K562 (cell line): ENCODE measurements at regions of chr7 and their contacts with region 1.

Region 1: GRCh38 chr7:100896732-100897608 is 1.3 kb upstream of the ACHE start:
- DNase-seq: peak; percentile 77 to 80 (median 78)
- ATAC-seq: peak; percentile 53
- H3K4me3 ChIP-seq: peak overlapping the region; percentile 39
- H3K27ac ChIP-seq: peak overlapping the region; percentile 48
- H3K4me1 ChIP-seq: peaks cover 27 to 71% of the 10 kb centered on the region in 2 experiments
- H3K27me3 ChIP-seq: no peaks in the 10 kb centered on the region
- CTCF ChIP-seq: peak; percentile 79 to 94 (median 84)
- EP300 ChIP-seq: no peak
- POLR2A ChIP-seq: no peak
- RAD21 ChIP-seq: peak; percentile 74 to 77

Region 2: DNA sequence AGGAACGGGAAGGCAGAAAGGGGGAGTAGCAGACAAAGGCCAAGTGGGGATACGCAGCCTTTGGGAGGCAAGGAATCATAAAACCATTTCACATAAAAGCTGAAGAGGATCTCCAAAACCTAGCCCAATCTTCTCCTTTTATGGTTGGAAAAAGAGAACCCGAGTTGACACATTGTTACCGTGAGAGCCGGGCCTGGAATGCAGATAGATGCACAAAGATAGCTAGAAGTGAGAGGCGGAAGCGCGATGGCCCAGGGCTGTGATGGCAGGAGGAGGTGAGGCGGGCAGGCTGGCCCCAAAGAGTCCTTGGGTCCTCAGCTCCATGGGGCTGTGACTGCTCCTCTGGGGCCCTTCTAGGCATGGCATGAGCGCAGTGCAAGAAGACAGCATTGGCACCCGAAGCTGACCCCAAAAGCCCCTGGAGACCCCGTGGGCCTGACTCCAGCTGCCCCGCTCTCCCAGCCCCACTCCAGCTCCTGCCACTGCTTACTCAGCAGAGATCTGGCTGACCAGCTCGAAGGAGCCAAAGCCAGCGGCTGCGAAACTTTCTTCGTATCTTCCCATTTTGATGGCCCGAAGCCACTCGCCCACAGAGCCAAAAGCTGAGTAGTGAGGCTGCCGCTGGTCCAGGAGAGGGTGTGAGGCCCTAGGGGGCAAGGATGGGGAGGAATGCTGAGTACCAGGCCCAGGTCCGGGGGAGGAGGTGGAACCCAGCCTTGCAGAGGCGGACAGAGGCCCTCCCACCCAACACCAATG is 92.1 kb before region 1 on chr7:
- CTCF ChIA-PET with region 1: no interaction called
- POLR2A ChIA-PET with region 1: no interaction called
- in situ Hi-C with region 1: no loop called
- intact Hi-C with region 1: no loop called
- DNase-seq: peak in 1 of 4 experiments; percentile 20
- ATAC-seq: no peak
- H3K4me3 ChIP-seq: no peak overlapping the region
- H3K27ac ChIP-seq: no peak overlapping the region
- H3K4me1 ChIP-seq: peaks cover 42 to 59% of the 10 kb centered on the region in 2 experiments
- H3K27me3 ChIP-seq: no peaks in the 10 kb centered on the region
- CTCF ChIP-seq: no peak
- EP300 ChIP-seq: no peak
- POLR2A ChIP-seq: no peak
- RAD21 ChIP-seq: no peak

Region 3: GRCh38 chr7:100933735-100934134 is 36.8 kb after region 1 on chr7:
- CTCF ChIA-PET with region 1: no interaction called
- POLR2A ChIA-PET with region 1: no interaction called
- in situ Hi-C with region 1: no loop called
- intact Hi-C with region 1: no loop called
- DNase-seq: peak; percentile 34 to 66 (median 56)
- ATAC-seq: peak; percentile 96
- H3K4me3 ChIP-seq: no peak overlapping the region
- H3K27ac ChIP-seq: no peak overlapping the region
- H3K4me1 ChIP-seq: peaks cover 0 to 7% of the 10 kb centered on the region in 2 experiments; a peak in 1 of 5 replicates
- H3K27me3 ChIP-seq: peaks cover 6% of the 10 kb centered on the region in 2 experiments; a peak in 3 of 5 replicates
- CTCF ChIP-seq: no peak
- EP300 ChIP-seq: no peak
- POLR2A ChIP-seq: no peak
- RAD21 ChIP-seq: no peak

Region 4: DNA sequence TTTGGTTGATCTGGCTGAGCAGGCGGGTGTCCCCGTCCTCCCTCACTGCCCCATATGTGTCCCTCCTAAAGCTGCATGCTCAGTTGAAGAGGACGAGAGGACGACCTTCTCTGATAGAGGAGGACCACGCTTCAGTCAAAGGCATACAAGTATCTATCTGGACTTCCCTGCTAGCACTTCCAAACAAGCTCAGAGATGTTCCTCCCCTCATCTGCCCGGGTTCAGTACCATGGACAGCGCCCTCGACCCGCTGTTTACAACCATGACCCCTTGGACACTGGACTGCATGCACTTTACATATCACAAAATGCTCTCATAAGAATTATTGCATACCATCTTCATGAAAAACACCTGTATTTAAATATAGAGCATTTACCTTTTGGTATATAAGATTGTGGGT is 161.4 kb after region 1 on chr7:
- CTCF ChIA-PET with region 1: interaction called, 44 read pairs
- POLR2A ChIA-PET with region 1: no interaction called
- in situ Hi-C with region 1: loop called (anchors 5 kb)
- intact Hi-C with region 1: loop called (anchors 1 kb)
- DNase-seq: peak; percentile 80 to 86 (median 84)
- ATAC-seq: peak; percentile 92
- H3K4me3 ChIP-seq: no peak overlapping the region
- H3K27ac ChIP-seq: no peak overlapping the region
- H3K4me1 ChIP-seq: no peaks in the 10 kb centered on the region
- H3K27me3 ChIP-seq: peaks cover 5 to 30% of the 10 kb centered on the region in 2 experiments; a peak in 3 of 5 replicates
- CTCF ChIP-seq: no peak
- EP300 ChIP-seq: no peak
- POLR2A ChIP-seq: no peak
- RAD21 ChIP-seq: no peak

Region 5: GRCh38 chr7:101502466-101503098 is 605.6 kb after region 1 on chr7:
- CTCF ChIA-PET with region 1: no interaction called
- POLR2A ChIA-PET with region 1: no interaction called
- in situ Hi-C with region 1: no loop called
- intact Hi-C with region 1: no loop called
- DNase-seq: no peak
- ATAC-seq: no peak
- H3K4me3 ChIP-seq: no peak overlapping the region
- H3K27ac ChIP-seq: no peak overlapping the region
- H3K4me1 ChIP-seq: no peaks in the 10 kb centered on the region
- H3K27me3 ChIP-seq: peaks cover 34 to 85% of the 10 kb centered on the region in 2 experiments
- CTCF ChIP-seq: no peak
- EP300 ChIP-seq: no peak
- POLR2A ChIP-seq: no peak
- RAD21 ChIP-seq: no peak